ENCODE measurements at regions of chr2 and their contacts with region 1.

Region 1: GRCh38 chr2:27428213-27428977 is at the start of gene NRBP1:
- DNase-seq: peak; percentile 97
- CTCF ChIP-seq: peak; percentile 28

Region 2: GRCh38 chr2:27409321-27410073 is 18.9 kb before region 1 on chr2 and contains the start of gene PPM1G:
- CTCF ChIA-PET with region 1: interaction called, 14 read pairs
- POLR2A ChIA-PET with region 1: interaction called, 12 read pairs
- DNase-seq: peak; percentile 98
- CTCF ChIP-seq: no peak

Region 3: DNA sequence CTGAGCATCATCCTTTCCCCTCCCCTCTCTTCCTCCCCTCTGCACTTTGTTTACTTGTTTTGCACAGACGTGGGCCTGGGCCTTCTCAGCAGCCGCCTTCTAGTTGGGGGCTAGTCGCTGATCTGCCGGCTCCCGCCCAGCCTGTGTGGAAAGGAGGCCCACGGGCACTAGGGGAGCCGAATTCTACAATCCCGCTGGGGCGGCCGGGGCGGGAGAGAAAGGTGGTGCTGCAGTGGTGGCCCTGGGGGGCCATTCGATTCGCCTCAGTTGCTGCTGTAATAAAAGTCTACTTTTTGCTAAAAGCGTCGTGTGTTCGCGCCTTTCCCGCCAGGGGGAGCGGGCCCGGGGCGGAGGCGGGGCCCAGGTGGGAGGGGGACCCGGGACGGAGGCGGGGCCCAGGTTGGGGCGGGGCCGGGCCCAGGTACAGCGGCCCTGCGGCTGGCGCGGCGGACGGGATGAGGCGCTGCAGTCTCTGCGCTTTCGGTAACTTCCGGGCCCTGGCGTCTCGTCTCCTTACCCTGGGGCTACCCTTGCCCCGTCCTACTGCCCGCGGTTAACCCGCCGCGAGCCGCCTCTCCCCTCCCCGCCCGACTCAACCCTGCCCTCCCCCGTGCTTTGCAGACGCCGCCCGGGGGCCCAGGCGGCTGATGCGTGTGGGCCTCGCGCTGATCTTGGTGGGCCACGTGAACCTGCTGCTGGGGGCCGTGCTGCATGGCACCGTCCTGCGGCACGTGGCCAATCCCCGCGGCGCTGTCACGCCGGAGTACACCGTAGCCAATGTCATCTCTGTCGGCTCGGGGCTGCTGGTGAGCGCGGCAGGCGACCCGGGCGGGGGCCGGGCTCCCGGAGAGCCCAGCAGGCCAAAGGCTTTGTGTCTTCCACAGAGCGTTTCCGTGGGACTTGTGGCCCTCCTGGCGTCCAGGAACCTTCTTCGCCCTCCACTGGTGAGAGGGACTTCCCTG is 13.8 kb after region 1 on chr2 and contains the start of gene KRTCAP3:
- CTCF ChIA-PET with region 1: interaction called, 26 read pairs
- POLR2A ChIA-PET with region 1: no interaction called
- DNase-seq: peak; percentile 82
- CTCF ChIP-seq: no peak

Region 4: GRCh38 chr2:27448381-27448780 is 20.0 kb after region 1 on chr2:
- CTCF ChIA-PET with region 1: interaction called, 13 read pairs
- POLR2A ChIA-PET with region 1: no interaction called
- DNase-seq: no peak
- CTCF ChIP-seq: no peak

Measured in GM10248 (cell line).